ENCODE measurements at regions of chr5 and their contacts with region 1.

Region 1: DNA sequence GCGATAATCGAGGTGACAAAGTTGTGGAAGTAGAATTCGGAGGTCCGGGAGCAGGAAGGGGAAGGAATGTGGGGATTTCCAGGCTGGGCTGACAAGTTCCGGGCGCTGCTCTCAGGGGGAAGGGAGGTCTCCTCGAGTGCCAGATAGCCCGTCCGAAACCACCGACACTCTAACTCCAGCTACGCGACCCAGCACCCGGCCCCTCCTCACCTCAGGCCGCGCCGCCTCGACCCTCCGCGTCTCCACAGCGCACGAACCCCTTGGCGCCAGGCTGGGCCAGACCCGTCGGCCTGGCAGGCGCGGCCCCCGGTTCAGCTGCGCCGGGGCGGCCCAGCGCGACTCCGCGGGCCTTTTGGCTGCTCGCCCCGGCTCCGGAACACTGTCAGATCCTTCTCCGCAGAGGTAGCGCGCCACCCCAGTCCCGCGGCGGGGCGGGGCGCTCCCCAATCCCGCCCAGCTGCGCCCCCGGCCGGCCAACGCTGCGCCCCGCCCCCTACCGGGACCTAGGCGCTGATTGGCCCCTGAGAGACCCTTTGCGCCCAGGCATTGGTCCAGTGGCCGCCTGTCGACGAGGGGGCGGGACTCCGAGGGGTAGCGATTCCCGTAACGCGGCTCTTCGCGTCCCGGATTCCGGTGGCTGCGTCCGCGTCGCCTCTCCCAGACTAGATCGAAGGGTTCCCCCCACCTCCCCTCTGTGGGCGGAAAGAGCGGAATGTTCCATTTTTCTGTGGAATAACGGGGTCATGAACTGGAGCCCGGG is at the start of gene IL6ST:
- DNase-seq: peak; percentile 93 to 95 (median 95)
- H3K4me3 ChIP-seq: peak within 1 kb of the TSS; percentile 91 to 97
- H3K4me3 Mint-ChIP-seq: peak within 1 kb of the TSS; percentile 95 to 100 (median 98)
- H3K27ac ChIP-seq: peak within 1 kb of the TSS; percentile 95
- H3K27ac Mint-ChIP-seq: peak within 1 kb of the TSS; percentile 93 to 100 (median 99)
- H3K4me1 ChIP-seq: peaks cover 42% of the 10 kb centered on the region
- H3K4me1 Mint-ChIP-seq: peaks cover 34 to 76% (median 44%) of the 10 kb centered on the region in 4 donors
- H3K27me3 ChIP-seq: no peaks in the 10 kb centered on the region
- H3K27me3 Mint-ChIP-seq: no peaks in the 10 kb centered on the region
- total RNA-seq, gene IL6ST: 176 to 180 TPM

Region 2: DNA sequence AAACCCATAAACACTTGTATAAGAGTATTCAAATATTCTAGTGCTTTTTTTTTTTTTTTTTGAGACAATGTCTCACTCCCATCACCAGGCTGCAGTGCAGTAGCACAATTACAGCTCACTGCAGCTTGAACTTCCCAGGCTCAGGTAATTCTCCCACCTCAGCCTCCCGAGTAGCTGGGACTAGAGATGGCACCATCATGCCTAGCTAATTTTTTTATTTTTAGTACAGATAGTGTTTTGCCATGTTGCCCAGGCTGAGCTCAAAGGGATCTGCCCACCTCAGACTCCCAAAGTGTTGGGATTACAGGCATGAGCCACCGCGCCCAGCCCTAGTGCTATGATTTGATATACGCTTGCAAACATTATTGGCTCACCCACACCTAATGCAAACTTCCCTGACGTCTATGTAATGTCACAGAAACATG is 11.8 kb before region 1 on chr5:
- CTCF ChIA-PET with region 1: interaction called, 12 read pairs
- POLR2A ChIA-PET with region 1: interaction called, 24 read pairs
- intact Hi-C with region 1: loop called (anchors 1 kb)
- DNase-seq: peak in 4 of 5 donors; percentile 22 to 34 (median 28)
- H3K4me3 ChIP-seq: no peak overlapping the region
- H3K4me3 Mint-ChIP-seq: peak overlapping the region; percentile 44 to 81 (median 64)
- H3K27ac ChIP-seq: no peak overlapping the region
- H3K27ac Mint-ChIP-seq: peak overlapping the region in 6 of 7 donors; percentile 19 to 86 (median 74)
- H3K4me1 ChIP-seq: peaks cover 90% of the 10 kb centered on the region
- H3K4me1 Mint-ChIP-seq: peaks cover 53 to 86% (median 69%) of the 10 kb centered on the region in 4 donors
- H3K27me3 ChIP-seq: no peaks in the 10 kb centered on the region
- H3K27me3 Mint-ChIP-seq: no peaks in the 10 kb centered on the region

Region 3: DNA sequence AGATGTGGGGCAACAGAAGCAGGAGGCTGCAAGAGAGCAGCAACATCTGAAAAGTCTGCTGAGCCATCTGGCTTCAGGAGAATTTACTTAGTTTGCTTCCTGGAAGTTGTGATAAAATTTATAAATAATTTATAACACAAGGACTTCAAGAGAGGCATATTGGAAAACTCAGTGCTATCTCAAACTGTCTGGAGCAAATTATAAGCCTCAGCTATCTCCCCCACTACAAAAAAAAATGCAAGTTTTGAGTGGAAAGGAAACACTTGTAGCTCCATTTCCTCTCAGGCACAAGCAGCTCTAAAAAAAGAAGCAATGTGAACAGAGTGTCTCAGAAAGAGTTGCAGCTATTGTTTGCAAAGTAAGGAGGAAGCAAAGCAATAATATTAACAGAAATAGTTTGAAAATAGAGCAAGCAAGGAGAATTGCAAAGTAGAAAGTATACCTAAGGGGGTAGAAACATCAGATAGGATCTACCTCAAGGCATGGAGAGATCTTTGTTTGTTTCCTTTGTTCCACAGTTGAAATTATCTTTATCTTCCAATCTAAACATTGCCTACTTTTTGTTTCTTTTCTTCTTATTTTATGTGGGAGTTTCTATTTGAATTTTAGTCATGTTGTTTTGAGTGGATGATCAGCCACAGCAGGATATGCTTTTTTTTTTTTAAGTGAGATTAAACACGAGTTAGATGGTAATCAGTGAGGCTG is 55.9 kb after region 1 on chr5:
- CTCF ChIA-PET with region 1: no interaction called
- POLR2A ChIA-PET with region 1: interaction called, 18 read pairs
- intact Hi-C with region 1: loop called (anchors 2 kb)
- DNase-seq: peak in 4 of 5 donors; percentile 45 to 62 (median 54)
- H3K4me3 ChIP-seq: no peak overlapping the region
- H3K4me3 Mint-ChIP-seq: peak overlapping the region; percentile 77 to 86 (median 82)
- H3K27ac ChIP-seq: no peak overlapping the region
- H3K27ac Mint-ChIP-seq: peak overlapping the region; percentile 73 to 96 (median 87)
- H3K4me1 ChIP-seq: peaks cover 65% of the 10 kb centered on the region
- H3K4me1 Mint-ChIP-seq: peaks cover 40 to 73% (median 55%) of the 10 kb centered on the region in 4 donors
- H3K27me3 ChIP-seq: no peaks in the 10 kb centered on the region
- H3K27me3 Mint-ChIP-seq: no peaks in the 10 kb centered on the region

Region 4: DNA sequence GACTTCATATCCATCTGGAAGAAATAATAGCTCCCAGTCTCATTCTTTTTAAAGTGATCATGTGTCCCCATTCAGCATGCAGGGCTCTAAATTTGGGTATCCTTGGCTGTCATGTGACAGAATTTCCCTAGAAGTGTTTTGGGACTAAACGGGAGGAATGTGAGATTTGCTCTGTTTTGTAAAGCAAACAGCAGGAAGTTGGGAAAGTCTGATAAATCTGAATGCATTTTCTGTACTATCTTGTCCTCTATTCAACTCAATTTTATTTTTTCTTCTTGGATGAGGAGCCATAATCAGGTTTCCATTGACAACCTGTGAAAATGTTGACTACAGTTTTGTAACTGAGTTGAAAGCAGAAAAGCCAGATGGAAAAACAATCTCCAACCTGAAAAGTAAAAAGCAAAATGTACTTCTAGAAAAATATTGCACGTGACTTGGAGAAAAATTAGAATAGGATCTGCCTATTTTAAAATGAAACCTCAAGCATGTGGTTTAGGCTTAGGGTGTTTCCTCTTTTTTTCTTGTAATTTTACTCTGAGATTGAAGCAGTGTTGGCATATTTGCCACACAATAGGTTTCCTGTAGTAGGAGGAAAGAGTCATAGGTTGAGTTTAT is 76.2 kb after region 1 on chr5:
- CTCF ChIA-PET with region 1: no interaction called
- POLR2A ChIA-PET with region 1: interaction called, 10 read pairs
- intact Hi-C with region 1: no loop called
- DNase-seq: peak in 4 of 5 donors; percentile 35 to 54 (median 43)
- H3K4me3 ChIP-seq: no peak overlapping the region
- H3K4me3 Mint-ChIP-seq: peak overlapping the region; percentile 5 to 84 (median 73)
- H3K27ac ChIP-seq: no peak overlapping the region
- H3K27ac Mint-ChIP-seq: peak overlapping the region; percentile 77 to 95 (median 89)
- H3K4me1 ChIP-seq: peaks cover 59% of the 10 kb centered on the region
- H3K4me1 Mint-ChIP-seq: peaks cover 44 to 80% (median 57%) of the 10 kb centered on the region in 4 donors
- H3K27me3 ChIP-seq: no peaks in the 10 kb centered on the region
- H3K27me3 Mint-ChIP-seq: no peaks in the 10 kb centered on the region

Region 5: GRCh38 chr5:56105511-56106291 is 110.9 kb after region 1 on chr5:
- CTCF ChIA-PET with region 1: interaction called, 7 read pairs
- POLR2A ChIA-PET with region 1: interaction called, 32 read pairs
- intact Hi-C with region 1: loop called (anchors 2 kb)
- DNase-seq: no peak
- H3K4me3 ChIP-seq: no peak overlapping the region
- H3K4me3 Mint-ChIP-seq: peak overlapping the region in 5 of 8 donors; percentile 9 to 63 (median 48)
- H3K27ac ChIP-seq: no peak overlapping the region
- H3K27ac Mint-ChIP-seq: peak overlapping the region; percentile 37 to 92 (median 68)
- H3K4me1 ChIP-seq: peaks cover 53% of the 10 kb centered on the region
- H3K4me1 Mint-ChIP-seq: peaks cover 31 to 59% (median 50%) of the 10 kb centered on the region in 4 donors
- H3K27me3 ChIP-seq: no peaks in the 10 kb centered on the region
- H3K27me3 Mint-ChIP-seq: no peaks in the 10 kb centered on the region

Region 6: DNA sequence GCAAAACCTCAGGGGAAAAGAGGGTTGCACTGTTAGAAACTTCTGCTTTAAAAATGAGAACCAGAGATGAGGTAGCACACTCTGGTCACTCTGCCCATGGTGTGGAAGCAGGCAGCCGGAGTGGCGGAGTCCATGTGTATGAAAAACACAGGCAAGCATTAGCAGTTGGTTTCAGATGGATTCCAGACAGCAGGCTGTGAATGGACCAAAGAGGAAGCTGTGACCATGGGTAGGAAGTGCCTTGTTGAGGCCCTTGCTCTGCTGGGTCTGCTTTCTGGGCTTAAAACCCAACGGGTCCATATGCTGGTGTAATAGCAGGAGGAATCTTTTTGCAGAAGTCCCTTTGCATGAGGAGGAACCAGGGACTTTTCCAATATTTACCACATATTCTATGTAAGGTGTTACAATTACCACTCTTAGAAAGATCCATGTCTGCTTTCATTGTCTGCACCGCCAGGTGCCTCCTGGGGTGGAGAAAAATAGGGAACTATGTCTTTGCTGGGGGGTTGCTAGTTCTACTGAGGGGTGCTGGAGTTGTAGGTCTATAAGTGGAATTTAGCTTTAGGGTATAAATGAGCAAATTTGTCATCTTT is 161.3 kb after region 1 on chr5:
- CTCF ChIA-PET with region 1: no interaction called
- POLR2A ChIA-PET with region 1: interaction called, 16 read pairs
- intact Hi-C with region 1: no loop called
- DNase-seq: no peak
- H3K4me3 ChIP-seq: no peak overlapping the region
- H3K4me3 Mint-ChIP-seq: peak overlapping the region; percentile 34 to 89 (median 60)
- H3K27ac ChIP-seq: peak overlapping the region; percentile 0
- H3K27ac Mint-ChIP-seq: peak overlapping the region; percentile 90 to 95 (median 91)
- H3K4me1 ChIP-seq: peaks cover 70% of the 10 kb centered on the region
- H3K4me1 Mint-ChIP-seq: peaks cover 51 to 88% (median 72%) of the 10 kb centered on the region in 4 donors
- H3K27me3 ChIP-seq: no peaks in the 10 kb centered on the region
- H3K27me3 Mint-ChIP-seq: no peaks in the 10 kb centered on the region